HEK293T (cell line): ENCODE measurements at regions of chr18 and their contacts with region 1.

Region 1: GRCh38 chr18:75350512-75350839 is 77.0 kb downstream of the SMIM21 start:
- DNase-seq: no peak

Region 2: GRCh38 chr18:75314115-75314514 is 36.4 kb before region 1 on chr18:
- CTCF ChIA-PET with region 1: interaction called, 10 read pairs
- POLR2A ChIA-PET with region 1: interaction called, 3 read pairs
- DNase-seq: no peak

Region 3: DNA sequence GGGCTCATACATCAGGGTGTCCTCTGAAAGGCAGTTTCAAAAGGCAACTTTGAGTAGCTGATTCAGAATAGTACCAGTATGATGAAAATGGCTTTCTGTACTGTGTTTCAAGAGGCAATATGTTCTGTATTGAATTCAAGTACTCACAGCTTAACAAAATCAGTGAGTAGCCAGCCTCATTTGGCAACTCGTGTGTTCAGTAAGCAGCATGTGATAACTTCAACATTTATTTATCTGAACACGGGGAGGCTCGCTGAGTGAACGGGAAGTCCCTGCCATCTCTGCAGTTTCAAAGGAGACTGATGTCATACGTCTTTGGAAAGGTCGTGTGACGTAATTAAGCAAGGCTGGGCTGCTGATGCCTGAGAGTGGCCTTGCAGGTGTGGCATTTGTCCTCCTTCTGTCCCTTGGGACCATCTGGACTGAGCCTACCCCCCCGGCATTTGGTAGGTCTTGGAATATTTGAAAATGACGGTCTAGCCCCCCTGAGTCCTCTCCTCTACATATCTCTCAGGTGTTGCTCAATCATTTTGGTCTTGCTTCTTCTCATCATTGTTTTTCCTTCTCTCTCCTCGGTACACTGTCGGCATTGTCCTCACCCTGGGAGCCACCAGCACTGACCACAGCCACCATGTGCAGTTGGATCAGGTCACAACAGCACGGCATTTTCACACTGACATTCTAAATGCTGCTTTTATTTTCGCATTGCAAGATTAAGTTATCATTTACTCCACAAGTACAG is 14.2 kb after region 1 on chr18:
- CTCF ChIA-PET with region 1: no interaction called
- POLR2A ChIA-PET with region 1: no interaction called
- DNase-seq: no peak